ENCODE measurements at regions of chr7 and their contacts with region 1.

Region 1: GRCh38 chr7:64307254-64308015 is 6.3 kb upstream of the ZNF736 start:
- DNase-seq: peak; percentile 88 to 96
- ATAC-seq: peak; percentile 97 to 99 (median 98)
- H3K4me3 ChIP-seq: peak overlapping the region; percentile 79
- H3K27ac ChIP-seq: peak overlapping the region; percentile 86
- H3K4me1 ChIP-seq: peaks cover 4% of the 10 kb centered on the region
- H3K27me3 ChIP-seq: no peaks in the 10 kb centered on the region
- CTCF ChIP-seq: no peak

Region 2: GRCh38 chr7:64574540-64575126 is 267.2 kb after region 1 on chr7:
- intact Hi-C with region 1: loop called in 1 of 2 experiments (anchors 5 kb)
- DNase-seq: peak in 1 of 2 donors; percentile 47
- ATAC-seq: peak; percentile 42 to 74 (median 67)
- H3K4me3 ChIP-seq: peak overlapping the region; percentile 54
- H3K27ac ChIP-seq: no peak overlapping the region
- H3K4me1 ChIP-seq: no peaks in the 10 kb centered on the region
- H3K27me3 ChIP-seq: peaks cover 0 to 4% (median 0%) of the 10 kb centered on the region in 3 donors
- CTCF ChIP-seq: no peak

Region 3: GRCh38 chr7:64794171-64794844 is 486.9 kb after region 1 on chr7 and contains the start of gene ZNF138:
- intact Hi-C with region 1: loop called in 1 of 2 experiments (anchors 10 kb)
- DNase-seq: peak; percentile 96 to 97
- ATAC-seq: peak; percentile 100
- H3K4me3 ChIP-seq: peak within 1 kb of the TSS; percentile 87
- H3K27ac ChIP-seq: peak within 1 kb of the TSS; percentile 87
- H3K4me1 ChIP-seq: peaks cover 11% of the 10 kb centered on the region
- H3K27me3 ChIP-seq: no peaks in the 10 kb centered on the region
- CTCF ChIP-seq: no peak
- total RNA-seq, gene ZNF138: 3.9 to 9.7 (median 6.0) TPM

Measured in psoas muscle (tissue), 8 donors.